Activated CD8-positive, alpha-beta T cell treated with anti-CD3 and anti-CD28 coated beads for 36 hours (primary cell): ENCODE measurements at regions of chr4 and their contacts with region 1.

Region 1: GRCh38 chr4:119628308-119629141 is at the start of gene PDE5A:
- DNase-seq: peak; percentile 83
- ATAC-seq: peak; percentile 87
- H3K4me3 Mint-ChIP-seq: peak within 1 kb of the TSS; percentile 71
- H3K27ac Mint-ChIP-seq: no peak within 1 kb of the TSS
- H3K4me1 Mint-ChIP-seq: peaks cover 19% of the 10 kb centered on the region
- H3K27me3 Mint-ChIP-seq: peaks cover 23% of the 10 kb centered on the region
- CTCF ChIP-seq: peak; percentile 82
- total RNA-seq, gene PDE5A: 0.22 to 0.32 TPM

Region 2: DNA sequence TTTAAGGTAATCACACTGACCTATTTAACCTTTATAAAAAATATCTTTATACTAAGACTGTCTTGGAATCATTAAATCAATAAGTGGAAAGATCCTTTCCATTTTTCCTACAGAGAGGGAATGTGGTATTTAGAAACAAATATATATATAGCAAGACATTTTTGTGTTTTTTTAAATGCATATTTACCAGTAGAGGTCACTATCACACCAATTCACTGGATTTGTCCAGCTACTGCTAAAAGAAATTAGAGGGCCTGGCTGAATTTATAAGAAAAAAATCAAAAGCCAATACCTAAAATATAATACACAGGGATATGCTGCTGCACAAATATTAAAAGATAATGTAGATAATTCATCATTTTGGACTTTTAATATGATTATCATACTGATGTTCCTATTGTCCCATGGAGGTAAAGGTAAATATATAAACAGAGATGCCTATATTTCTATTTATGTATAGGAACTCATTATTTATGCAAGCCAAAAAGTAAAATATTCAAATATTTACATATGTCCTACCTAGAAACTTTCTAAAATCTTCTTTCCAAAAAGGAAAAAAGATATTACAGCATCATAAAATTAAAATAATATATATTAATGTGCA is 69.4 kb before region 1 on chr4:
- CTCF ChIA-PET with region 1: interaction called, 24 read pairs
- POLR2A ChIA-PET with region 1: no interaction called
- intact Hi-C with region 1: no loop called
- DNase-seq: no peak
- ATAC-seq: no peak
- H3K4me3 Mint-ChIP-seq: no peak overlapping the region
- H3K27ac Mint-ChIP-seq: no peak overlapping the region
- H3K4me1 Mint-ChIP-seq: no peaks in the 10 kb centered on the region
- H3K27me3 Mint-ChIP-seq: no peaks in the 10 kb centered on the region
- CTCF ChIP-seq: peak; percentile 47

Region 3: DNA sequence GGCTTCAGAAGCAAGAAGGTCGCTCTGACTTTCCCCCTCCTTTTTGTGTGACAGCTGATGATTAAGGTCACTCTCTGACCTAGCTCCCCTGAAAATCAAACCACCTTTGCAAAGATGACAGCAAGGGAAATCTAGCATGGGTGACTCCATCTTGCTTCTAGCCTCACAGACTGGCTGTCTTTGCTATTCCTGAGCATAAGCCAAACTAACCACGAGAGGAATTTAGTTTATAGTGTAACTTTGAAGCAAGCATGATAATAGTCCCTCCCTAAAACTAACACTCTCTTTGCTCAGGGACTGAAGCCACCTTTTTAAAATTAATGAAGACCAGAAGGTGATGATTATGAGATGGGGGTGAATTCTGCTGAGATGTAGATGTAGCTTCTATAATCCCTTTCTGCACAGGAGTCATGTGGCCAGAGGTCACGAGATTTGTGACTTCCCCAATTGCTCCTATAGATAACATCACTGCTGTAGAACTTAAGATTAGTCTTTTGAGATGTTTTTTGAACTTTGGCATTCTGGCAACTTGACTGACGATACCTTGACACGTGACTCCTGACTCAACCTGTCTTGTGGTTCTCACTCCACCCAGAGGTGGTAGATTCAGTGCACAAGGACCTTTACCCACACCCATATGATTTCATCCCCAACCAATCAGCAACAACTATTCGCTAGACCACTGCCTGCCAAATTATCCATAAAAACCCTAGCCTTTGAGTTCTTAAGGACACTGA is 14.9 kb after region 1 on chr4:
- CTCF ChIA-PET with region 1: interaction called, 34 read pairs
- POLR2A ChIA-PET with region 1: interaction called, 5 read pairs
- intact Hi-C with region 1: no loop called
- DNase-seq: peak; percentile 11
- ATAC-seq: peak; percentile 49
- H3K4me3 Mint-ChIP-seq: no peak overlapping the region
- H3K27ac Mint-ChIP-seq: no peak overlapping the region
- H3K4me1 Mint-ChIP-seq: no peaks in the 10 kb centered on the region
- H3K27me3 Mint-ChIP-seq: peaks cover 11% of the 10 kb centered on the region
- CTCF ChIP-seq: no peak

Region 4: GRCh38 chr4:119785963-119786362 is 157.4 kb after region 1 on chr4:
- CTCF ChIA-PET with region 1: interaction called, 13 read pairs
- POLR2A ChIA-PET with region 1: no interaction called
- intact Hi-C with region 1: no loop called
- DNase-seq: peak; percentile 8
- ATAC-seq: no peak
- H3K4me3 Mint-ChIP-seq: no peak overlapping the region
- H3K27ac Mint-ChIP-seq: no peak overlapping the region
- H3K4me1 Mint-ChIP-seq: no peaks in the 10 kb centered on the region
- H3K27me3 Mint-ChIP-seq: peaks cover 2% of the 10 kb centered on the region
- CTCF ChIP-seq: no peak

Region 5: DNA sequence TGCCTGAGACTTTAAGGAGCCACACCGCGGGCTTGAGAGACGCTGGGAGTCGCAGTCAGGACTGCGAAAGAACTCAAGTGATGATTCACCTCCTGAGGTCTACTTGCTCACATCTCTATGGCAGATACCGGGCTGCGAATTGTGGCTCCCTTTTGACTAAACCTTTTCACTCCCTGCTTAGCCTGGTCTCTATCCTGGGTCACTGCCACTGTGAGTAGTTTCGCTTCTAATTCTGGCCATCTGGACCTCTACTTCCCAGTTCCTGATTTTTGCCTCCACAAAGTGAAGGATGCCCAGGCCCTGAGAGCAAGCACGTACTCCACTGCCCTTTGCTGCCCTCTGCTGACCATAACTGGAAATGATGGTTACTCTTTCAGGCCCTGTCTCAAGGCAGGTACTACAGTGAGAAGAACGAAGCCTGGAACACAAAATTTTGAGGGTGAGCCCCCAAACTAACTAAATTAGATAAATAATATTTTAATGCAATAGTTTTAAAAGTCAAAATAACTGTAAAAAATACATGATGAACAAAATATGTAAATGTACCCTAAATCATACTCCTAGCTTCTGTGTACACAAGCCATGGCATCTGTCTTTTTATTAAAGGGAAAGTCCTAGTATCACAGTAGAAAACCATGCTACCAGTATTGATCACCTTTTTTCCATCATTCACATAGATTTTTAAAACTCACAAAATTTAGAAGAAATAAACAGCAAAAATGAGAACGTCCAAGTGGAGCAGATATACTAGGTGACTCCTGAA is 421.4 kb after region 1 on chr4:
- CTCF ChIA-PET with region 1: interaction called, 21 read pairs
- POLR2A ChIA-PET with region 1: no interaction called
- intact Hi-C with region 1: loop called (anchors 2 kb)
- DNase-seq: peak; percentile 81
- ATAC-seq: peak; percentile 93
- H3K4me3 Mint-ChIP-seq: no peak overlapping the region
- H3K27ac Mint-ChIP-seq: peak overlapping the region; percentile 70
- H3K4me1 Mint-ChIP-seq: peaks cover 5% of the 10 kb centered on the region
- H3K27me3 Mint-ChIP-seq: no peaks in the 10 kb centered on the region
- CTCF ChIP-seq: peak; percentile 61